Aorta (tissue), 5 donors: ENCODE measurements at regions of chr17 and their contacts with region 1.

Region 1: DNA sequence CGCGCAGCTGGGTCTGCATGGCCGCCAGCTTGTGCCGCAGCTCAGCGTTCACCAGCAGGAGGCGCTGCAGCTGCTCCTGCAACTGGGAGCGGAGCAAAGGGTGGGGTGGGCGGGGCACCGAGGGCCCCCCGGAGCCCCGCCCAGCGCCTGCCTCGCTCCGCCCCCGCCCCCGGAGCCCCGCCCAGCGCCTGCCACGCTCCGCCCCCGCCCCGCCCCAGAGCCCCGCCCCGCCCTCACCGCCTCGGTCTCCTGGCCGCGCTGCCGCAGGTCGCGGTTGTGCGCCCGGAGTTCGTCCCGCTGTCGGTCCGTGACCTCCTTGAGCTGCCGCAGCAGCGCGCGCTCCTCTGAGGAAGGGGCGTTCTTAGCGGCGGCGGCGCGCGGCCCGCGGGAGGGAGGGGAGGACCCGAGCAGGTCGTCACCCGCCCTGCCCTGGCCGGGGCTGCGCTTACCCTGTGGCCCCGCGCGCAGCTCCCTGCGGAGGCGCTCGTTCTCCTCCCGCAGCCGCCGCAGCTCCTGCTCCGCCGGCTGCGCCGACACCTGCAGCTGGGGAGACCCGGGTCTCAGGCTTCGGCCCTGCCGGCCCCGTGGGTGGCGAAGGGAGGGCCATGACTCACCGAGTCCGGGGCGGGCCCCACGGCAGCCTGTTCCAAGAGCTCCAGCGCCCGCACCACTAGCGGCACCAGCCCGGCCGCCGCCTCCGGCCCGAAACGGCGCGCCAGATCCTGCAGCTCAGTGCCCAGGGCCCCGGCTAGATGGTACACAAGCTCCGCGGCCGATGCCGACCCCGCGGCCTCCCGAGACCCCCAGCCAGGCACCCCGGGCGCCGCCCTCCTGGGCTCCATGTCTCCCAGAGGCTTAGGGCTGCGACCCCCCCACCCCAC is 463 bp downstream of the RILP start:
- DNase-seq: peak; percentile 97 to 98
- ATAC-seq: peak; percentile 87
- H3K4me3 ChIP-seq: peak overlapping the region; percentile 62 to 73
- H3K27ac ChIP-seq: peak overlapping the region in 1 of 2 donors; percentile 79
- H3K4me1 ChIP-seq: no peaks in the 10 kb centered on the region
- H3K27me3 ChIP-seq: no peaks in the 10 kb centered on the region

Region 2: DNA sequence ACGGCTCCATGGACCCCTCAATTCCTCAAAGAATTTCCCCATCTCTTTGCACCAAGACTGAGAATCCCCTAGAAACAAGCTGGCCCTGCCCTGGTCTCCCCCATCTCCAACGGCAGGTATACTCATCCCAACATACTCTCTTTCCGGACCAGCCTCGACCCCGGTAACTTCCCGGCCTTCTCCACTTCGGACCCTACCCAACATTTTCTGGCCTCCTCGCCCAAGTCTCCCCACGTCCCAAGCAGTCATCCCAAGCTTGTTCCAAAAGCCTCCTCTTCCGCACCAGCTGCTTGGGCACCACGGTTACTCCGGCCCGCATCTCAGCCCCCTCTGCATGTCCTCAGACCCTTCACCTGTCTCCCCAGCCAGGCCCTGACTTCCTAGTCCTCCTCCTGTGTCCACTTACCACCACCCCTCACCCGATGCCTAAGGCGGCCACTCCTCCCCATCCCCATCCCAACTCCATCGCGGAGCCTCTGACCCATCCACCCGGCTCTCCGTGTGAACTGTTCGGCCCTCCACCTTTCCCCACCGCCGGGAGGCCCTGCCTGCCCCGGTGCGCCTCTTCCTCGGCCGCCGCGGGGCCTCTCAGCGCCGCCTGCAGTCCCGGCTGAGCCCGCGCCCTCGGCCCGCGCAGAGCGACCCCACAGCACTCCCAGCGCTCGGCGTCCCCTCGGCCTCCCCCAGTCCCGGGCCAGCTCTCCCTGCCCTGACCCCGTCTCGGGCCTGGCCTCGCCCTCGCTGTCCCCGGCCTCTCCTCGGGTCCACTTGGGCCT is 87.6 kb before region 1 on chr17:
- intact Hi-C with region 1: no loop called
- DNase-seq: no peak
- ATAC-seq: peak; percentile 24
- H3K4me3 ChIP-seq: peak overlapping the region; percentile 72 to 80
- H3K27ac ChIP-seq: peak overlapping the region; percentile 55 to 68
- H3K4me1 ChIP-seq: no peaks in the 10 kb centered on the region
- H3K27me3 ChIP-seq: no peaks in the 10 kb centered on the region

Region 3: GRCh38 chr17:1573916-1574696 is 75.1 kb before region 1 on chr17:
- intact Hi-C with region 1: loop called (anchors 1 kb)
- DNase-seq: peak; percentile 91 to 96
- ATAC-seq: peak; percentile 86
- H3K4me3 ChIP-seq: no peak overlapping the region
- H3K27ac ChIP-seq: no peak overlapping the region
- H3K4me1 ChIP-seq: no peaks in the 10 kb centered on the region
- H3K27me3 ChIP-seq: no peaks in the 10 kb centered on the region

Region 4: GRCh38 chr17:1730328-1731193 is 81.4 kb after region 1 on chr17:
- intact Hi-C with region 1: no loop called
- DNase-seq: peak; percentile 80 to 93
- ATAC-seq: peak; percentile 80
- H3K4me3 ChIP-seq: no peak overlapping the region
- H3K27ac ChIP-seq: no peak overlapping the region
- H3K4me1 ChIP-seq: no peaks in the 10 kb centered on the region
- H3K27me3 ChIP-seq: no peaks in the 10 kb centered on the region